CD8-positive, alpha-beta T cell (primary cell): ENCODE measurements at regions of chr13 and their contacts with region 1.

Region 1: GRCh38 chr13:76016799-76017400 is 380.8 kb downstream of the LMO7 start:
- DNase-seq: peak in 3 of 9 experiments; percentile 7 to 12 (median 10)
- ATAC-seq: no peak
- H3K4me3 ChIP-seq: no peak overlapping the region
- H3K4me3 Mint-ChIP-seq: no peak overlapping the region
- H3K27ac ChIP-seq: no peak overlapping the region
- H3K27ac Mint-ChIP-seq: no peak overlapping the region
- H3K4me1 ChIP-seq: no peaks in the 10 kb centered on the region
- H3K4me1 Mint-ChIP-seq: no peaks in the 10 kb centered on the region
- H3K27me3 ChIP-seq: no peaks in the 10 kb centered on the region
- H3K27me3 Mint-ChIP-seq: no peaks in the 10 kb centered on the region
- CTCF ChIP-seq: peak; percentile 26

Region 2: DNA sequence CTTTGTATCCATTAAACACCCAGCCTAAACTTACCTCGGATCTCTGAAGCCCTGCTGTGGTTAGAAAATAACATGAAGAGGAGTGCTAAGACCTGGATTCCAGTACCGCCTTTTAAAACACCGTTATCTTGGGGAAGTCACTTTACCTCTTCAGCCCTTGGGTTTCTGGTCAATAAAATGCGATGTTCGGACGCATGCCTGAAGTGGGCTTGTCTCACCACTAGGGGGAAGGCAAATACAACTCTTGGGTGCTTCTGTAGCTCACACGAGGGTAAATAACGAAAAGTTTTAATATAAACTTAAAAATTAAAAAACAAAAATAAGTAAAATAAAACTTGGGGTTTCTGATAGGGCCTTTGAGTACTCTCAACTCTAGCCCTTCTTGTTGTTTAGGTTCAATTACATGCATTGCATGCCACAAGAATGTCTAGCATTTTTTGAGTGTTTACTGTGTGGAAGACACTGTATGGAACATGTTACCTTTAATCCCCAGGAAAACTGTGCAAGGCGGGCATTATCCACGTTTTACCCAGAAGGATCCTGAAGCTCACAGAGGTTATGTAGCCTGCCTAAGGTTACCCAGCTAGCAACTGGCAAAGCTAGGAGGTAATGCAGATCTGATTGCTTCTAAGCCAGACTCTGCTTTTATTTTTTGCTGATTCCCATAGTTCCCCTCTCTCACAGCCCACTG is 140.4 kb before region 1 on chr13:
- CTCF ChIA-PET with region 1: no interaction called
- POLR2A ChIA-PET with region 1: no interaction called
- intact Hi-C with region 1: loop called (anchors 2 to 5 kb)
- DNase-seq: peak; percentile 8 to 69 (median 46)
- ATAC-seq: peak; percentile 95
- H3K4me3 ChIP-seq: no peak overlapping the region
- H3K4me3 Mint-ChIP-seq: peak overlapping the region; percentile 52
- H3K27ac ChIP-seq: no peak overlapping the region
- H3K27ac Mint-ChIP-seq: no peak overlapping the region
- H3K4me1 ChIP-seq: no peaks in the 10 kb centered on the region
- H3K4me1 Mint-ChIP-seq: peaks cover 17% of the 10 kb centered on the region
- H3K27me3 ChIP-seq: no peaks in the 10 kb centered on the region
- H3K27me3 Mint-ChIP-seq: peaks cover 2% of the 10 kb centered on the region
- CTCF ChIP-seq: peak; percentile 87